HAP-1 (cell line): ENCODE measurements at regions of chr6 and their contacts with region 1.

Region 1: DNA sequence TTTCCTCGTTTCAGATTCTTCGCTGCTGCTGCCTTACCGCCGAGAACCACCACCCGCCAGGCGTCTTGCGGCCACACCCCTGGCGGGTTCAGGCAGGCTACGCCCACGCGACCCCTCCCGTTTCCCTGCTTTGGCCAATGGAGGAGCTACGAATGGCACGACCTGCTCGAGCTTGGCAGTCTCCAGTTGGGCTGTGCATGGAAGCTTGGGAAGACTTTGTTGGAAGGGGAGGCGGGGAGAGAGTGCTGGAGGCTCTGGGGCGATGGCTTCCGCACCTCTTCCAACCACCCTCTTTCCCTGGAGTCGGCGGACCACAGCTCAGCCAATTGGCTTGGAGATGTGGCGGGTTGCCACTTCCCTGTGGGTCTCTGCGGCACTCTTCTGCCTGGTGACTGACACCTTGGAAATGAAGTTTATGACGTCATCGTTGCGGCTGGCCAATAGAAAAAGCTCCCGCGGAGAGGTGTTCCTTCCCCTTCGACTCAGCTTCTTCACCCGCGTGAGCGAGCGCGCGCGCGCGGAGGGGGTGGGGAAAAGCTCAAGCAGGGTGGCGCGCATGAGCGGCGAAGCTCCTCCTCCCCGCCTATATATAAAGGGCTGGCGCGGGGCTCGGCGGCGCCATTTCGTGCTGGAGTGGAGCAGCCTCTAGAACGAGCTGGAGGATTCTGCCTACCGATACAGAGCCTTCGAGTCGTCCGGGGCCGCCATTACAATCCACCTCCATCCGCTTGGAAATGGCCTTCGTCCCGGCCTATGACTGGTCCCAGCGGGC is 3.4 kb downstream of the BRD2 start:
- DNase-seq: peak; percentile 99
- H3K4me3 ChIP-seq: peak overlapping the region; percentile 89
- H3K4me1 ChIP-seq: peaks cover 13% of the 10 kb centered on the region
- H3K27me3 ChIP-seq: no peaks in the 10 kb centered on the region

Region 2: DNA sequence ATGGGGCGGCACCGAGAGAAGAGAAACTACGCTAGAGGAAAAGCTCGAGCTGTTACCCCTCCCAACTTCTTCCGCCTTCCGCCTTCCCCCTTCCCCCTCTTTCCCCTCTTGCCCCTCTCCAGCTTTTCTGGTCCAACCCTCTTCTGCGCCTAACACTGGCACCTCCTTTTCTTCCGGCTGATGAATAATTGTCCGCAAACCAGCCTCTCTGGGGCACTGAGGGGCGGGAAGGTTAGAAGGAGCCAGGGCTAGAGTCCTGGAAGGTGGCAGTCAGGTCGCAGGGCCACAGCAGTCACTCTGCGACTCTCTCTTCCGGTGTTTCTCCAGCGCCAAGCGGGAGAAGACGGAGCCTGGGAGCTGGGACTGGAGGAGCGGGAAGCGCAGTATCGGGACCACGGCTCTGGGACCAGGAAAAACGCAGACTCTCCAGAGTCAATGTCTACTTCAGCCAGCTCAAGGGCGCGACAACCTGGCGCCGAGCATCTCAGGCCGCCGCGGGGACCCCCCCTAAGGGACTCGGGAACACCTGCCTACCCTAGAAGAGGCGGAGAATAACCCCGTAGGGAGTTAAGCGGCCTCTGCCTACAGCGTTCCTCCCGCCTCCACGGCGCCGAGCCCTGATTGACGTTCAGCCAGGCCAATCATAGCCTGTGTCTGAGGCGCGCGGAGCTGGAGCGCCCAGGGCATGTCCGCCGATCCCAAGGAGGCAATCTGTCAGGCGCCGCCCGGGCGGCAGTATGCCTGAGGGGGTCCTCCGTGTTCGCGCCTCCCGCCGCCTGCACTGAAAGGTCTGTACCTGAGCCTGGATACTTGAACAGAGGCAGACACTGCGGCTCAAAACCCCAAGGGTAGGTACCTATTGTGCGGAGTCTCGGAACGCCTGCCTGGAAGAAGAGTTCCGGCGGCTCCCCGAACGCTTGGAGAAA is 77.4 kb before region 1 on chr6:
- in situ Hi-C with region 1: loop called (anchors 5 kb)
- DNase-seq: peak; percentile 79 to 96
- H3K4me3 ChIP-seq: peak overlapping the region; percentile 86
- H3K4me1 ChIP-seq: peaks cover 9% of the 10 kb centered on the region
- H3K27me3 ChIP-seq: peaks cover 7% of the 10 kb centered on the region; the same call in 1 of the 2 replicates

Region 3: GRCh38 chr6:33391278-33391921 is 419.6 kb after region 1 on chr6 and contains the start of gene KIFC1:
- in situ Hi-C with region 1: no loop called
- DNase-seq: peak; percentile 99
- H3K4me3 ChIP-seq: peak within 1 kb of the TSS; percentile 99
- H3K4me1 ChIP-seq: peaks cover 21% of the 10 kb centered on the region
- H3K27me3 ChIP-seq: no peaks in the 10 kb centered on the region